Activated B cell treated with CpG ODN at 0.5 μM for 24 hours (primary cell): ENCODE measurements at regions of chr14 and their contacts with region 1.

Region 1: GRCh38 chr14:68248481-68249255 is 429.1 kb downstream of the RAD51B start:
- DNase-seq: peak; percentile 34
- ATAC-seq: peak; percentile 77
- H3K4me3 Mint-ChIP-seq: peak overlapping the region; percentile 19
- H3K27ac Mint-ChIP-seq: peak overlapping the region; percentile 90
- H3K4me1 Mint-ChIP-seq: peaks cover 72% of the 10 kb centered on the region
- H3K27me3 Mint-ChIP-seq: no peaks in the 10 kb centered on the region
- CTCF ChIP-seq: no peak

Region 2: DNA sequence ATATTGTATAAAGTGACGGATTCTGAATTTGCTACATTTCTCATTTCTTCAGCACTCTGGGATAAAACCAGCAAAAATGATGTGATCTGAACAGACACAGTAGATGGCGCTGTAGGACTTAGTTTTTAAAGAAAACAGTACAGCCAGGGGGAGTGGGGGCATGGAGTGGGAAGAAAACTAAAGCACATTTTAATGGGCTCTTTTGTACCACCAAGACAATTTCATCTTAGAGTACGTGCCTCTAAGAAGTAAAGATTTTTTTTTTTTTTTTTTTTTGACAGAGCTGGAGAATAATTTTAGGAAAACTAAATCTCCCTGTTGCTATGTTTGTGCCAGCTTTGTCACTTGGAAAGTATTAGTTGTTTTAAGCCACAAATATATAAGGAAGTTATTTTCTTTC is 304.7 kb before region 1 on chr14:
- CTCF ChIA-PET with region 1: interaction called, 7 read pairs
- POLR2A ChIA-PET with region 1: no interaction called
- intact Hi-C with region 1: loop called (anchors 1 kb)
- DNase-seq: no peak
- ATAC-seq: peak; percentile 54
- H3K4me3 Mint-ChIP-seq: no peak overlapping the region
- H3K27ac Mint-ChIP-seq: no peak overlapping the region
- H3K4me1 Mint-ChIP-seq: peaks cover 8% of the 10 kb centered on the region
- H3K27me3 Mint-ChIP-seq: no peaks in the 10 kb centered on the region
- CTCF ChIP-seq: no peak

Region 3: DNA sequence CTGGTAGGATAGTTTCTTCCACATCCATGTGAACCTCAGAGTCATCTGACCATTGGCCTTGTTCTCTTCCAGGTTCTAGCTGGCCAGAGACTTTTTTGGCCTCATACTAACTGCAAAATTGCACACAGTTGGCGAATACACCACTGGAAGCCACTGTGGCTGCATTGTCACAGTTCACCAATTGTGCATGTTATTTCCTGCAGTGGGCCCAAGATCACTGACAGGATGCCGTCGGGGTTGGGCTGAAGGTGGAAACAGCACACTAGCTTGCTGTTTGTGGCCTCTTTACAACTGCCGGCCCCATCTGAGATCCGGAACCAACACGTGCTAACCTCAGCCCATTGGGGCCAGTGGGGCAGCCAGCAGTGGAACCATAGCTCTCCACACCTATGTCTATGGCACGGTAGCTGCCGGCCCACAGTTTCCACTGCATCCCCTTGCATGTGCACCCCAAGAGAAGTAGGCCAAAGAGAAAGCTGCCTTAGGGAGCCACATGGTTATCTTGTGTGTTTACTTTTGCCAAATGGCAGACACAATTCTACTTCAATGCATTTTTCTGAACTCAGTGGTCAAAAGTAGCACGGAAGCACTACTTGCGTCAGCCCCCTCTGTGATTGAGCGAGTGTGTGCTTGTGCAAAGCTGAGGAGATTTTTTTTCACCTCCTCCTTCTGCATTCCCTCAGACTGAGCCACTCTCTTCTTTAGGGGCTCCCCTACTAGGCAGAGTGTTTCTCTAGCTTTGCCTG is 34.9 kb after region 1 on chr14:
- CTCF ChIA-PET with region 1: interaction called, 54 read pairs
- POLR2A ChIA-PET with region 1: interaction called, 213 read pairs
- intact Hi-C with region 1: loop called (anchors 1 kb)
- DNase-seq: peak; percentile 61
- ATAC-seq: peak; percentile 60
- H3K4me3 Mint-ChIP-seq: peak overlapping the region; percentile 58
- H3K27ac Mint-ChIP-seq: peak overlapping the region; percentile 99
- H3K4me1 Mint-ChIP-seq: peaks cover 97% of the 10 kb centered on the region
- H3K27me3 Mint-ChIP-seq: no peaks in the 10 kb centered on the region
- CTCF ChIP-seq: no peak

Region 4: GRCh38 chr14:68377459-68377858 is 128.8 kb after region 1 on chr14:
- CTCF ChIA-PET with region 1: interaction called, 5 read pairs
- POLR2A ChIA-PET with region 1: interaction called, 21 read pairs
- intact Hi-C with region 1: no loop called
- DNase-seq: no peak
- ATAC-seq: peak; percentile 43
- H3K4me3 Mint-ChIP-seq: peak overlapping the region; percentile 50
- H3K27ac Mint-ChIP-seq: peak overlapping the region; percentile 83
- H3K4me1 Mint-ChIP-seq: peaks cover 69% of the 10 kb centered on the region
- H3K27me3 Mint-ChIP-seq: no peaks in the 10 kb centered on the region
- CTCF ChIP-seq: no peak

Region 5: GRCh38 chr14:68495101-68496039 is 246.7 kb after region 1 on chr14:
- CTCF ChIA-PET with region 1: interaction called, 10 read pairs
- POLR2A ChIA-PET with region 1: interaction called, 32 read pairs
- intact Hi-C with region 1: loop called (anchors 1 kb)
- DNase-seq: no peak
- ATAC-seq: peak; percentile 92
- H3K4me3 Mint-ChIP-seq: peak overlapping the region; percentile 64
- H3K27ac Mint-ChIP-seq: peak overlapping the region; percentile 98
- H3K4me1 Mint-ChIP-seq: peaks cover 84% of the 10 kb centered on the region
- H3K27me3 Mint-ChIP-seq: no peaks in the 10 kb centered on the region
- CTCF ChIP-seq: no peak

Region 6: DNA sequence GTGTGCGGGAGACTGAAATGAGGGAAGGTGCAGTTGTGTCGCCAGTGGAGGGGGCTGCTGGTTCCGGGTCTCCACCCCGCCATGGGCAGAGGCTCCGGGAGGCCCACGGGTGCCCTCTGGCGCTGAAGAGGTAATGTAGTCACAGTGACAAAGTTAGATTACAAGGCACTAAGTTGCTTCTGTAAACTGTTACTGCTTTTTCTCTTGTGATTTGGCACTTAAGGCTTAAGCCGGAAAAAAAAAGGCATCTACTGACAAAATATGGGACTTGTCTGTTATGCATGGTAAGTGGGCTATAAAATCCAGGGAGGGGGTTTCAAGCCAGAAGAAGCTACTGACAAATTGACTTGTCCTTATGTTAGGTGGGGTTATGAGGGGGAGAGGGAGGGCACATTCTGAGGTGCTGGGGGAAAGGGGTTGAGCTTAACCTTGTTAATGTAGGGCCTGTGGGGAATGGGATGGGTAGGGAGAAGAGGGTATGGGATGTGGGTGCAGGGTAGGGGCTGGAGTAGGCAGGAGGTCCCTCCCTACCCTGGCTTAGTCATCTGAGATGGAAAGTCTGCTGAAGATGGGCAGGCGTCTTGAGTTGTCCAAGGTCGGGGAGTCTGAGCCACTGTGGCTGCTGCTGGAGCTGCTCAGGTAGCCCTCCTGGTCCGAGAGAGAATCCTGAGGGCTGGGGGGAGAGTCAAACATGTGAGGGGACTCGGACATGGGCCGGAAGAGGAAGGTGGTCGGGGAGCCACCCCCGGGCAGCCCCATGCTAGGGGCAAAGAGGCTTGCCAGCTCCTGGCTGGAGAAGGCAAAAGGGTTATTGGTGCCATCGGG is 540.5 kb after region 1 on chr14:
- CTCF ChIA-PET with region 1: interaction called, 79 read pairs
- POLR2A ChIA-PET with region 1: interaction called, 522 read pairs
- intact Hi-C with region 1: loop called (anchors 1 kb)
- DNase-seq: peak; percentile 62
- ATAC-seq: no peak
- H3K4me3 Mint-ChIP-seq: peak overlapping the region; percentile 100
- H3K27ac Mint-ChIP-seq: peak overlapping the region; percentile 99
- H3K4me1 Mint-ChIP-seq: peaks cover 54% of the 10 kb centered on the region
- H3K27me3 Mint-ChIP-seq: no peaks in the 10 kb centered on the region
- CTCF ChIP-seq: no peak